PC-3 (cell line): ENCODE measurements at regions of chr1 and their contacts with region 1.

Region 1: DNA sequence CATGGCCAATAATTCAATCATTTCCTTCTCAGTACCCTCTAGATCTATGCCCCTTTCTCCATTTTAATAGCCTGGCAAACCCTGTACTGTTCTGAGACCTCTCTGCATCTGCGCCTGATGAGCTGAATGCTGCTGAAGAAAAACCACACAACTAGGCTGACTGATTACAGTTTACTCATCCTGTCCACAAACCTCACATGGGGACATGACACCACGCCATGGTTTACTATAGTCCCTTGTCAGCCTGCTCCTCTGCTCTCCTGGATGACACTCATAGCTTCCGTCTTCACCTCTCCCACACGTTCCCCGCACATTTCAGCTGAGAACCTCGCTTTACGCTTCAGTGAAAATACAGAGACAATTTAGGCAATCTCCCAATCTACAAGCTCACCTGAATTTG is 59.7 kb downstream of the DESI2 start:
- DNase-seq: no peak
- ATAC-seq: peak; percentile 58
- H3K4me3 ChIP-seq: no peak overlapping the region
- H3K27ac ChIP-seq: no peak overlapping the region
- H3K4me1 ChIP-seq: 0 out of 2 replicates have a peak, but pooled peaks cover 4% of the 10 kb centered on the region
- H3K27me3 ChIP-seq: no peaks in the 10 kb centered on the region
- CTCF ChIP-seq: no peak

Region 2: DNA sequence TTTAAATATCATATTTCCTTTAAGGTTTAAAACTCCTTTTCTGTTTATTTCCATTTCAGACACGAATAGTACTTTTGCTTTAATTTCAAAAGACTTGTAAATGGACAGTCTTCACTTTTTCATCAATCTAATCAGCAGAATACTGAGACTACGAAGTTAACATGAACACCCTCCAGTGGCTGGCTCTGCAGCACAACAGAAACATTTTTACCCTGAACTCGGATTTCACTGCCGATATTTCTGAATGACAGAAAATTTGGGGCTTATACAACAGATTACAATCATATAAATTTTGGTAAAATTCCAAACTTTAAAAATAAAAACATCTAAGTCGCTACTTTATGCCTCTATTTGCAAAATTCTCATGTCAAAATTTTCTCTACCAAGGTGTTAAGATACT is 948.9 kb before region 1 on chr1:
- CTCF ChIA-PET with region 1: no interaction called
- POLR2A ChIA-PET with region 1: no interaction called
- intact Hi-C with region 1: no loop called
- DNase-seq: no peak
- ATAC-seq: no peak
- H3K4me3 ChIP-seq: no peak overlapping the region
- H3K27ac ChIP-seq: no peak overlapping the region
- H3K4me1 ChIP-seq: no peaks in the 10 kb centered on the region
- H3K27me3 ChIP-seq: no peaks in the 10 kb centered on the region
- CTCF ChIP-seq: no peak

Region 3: DNA sequence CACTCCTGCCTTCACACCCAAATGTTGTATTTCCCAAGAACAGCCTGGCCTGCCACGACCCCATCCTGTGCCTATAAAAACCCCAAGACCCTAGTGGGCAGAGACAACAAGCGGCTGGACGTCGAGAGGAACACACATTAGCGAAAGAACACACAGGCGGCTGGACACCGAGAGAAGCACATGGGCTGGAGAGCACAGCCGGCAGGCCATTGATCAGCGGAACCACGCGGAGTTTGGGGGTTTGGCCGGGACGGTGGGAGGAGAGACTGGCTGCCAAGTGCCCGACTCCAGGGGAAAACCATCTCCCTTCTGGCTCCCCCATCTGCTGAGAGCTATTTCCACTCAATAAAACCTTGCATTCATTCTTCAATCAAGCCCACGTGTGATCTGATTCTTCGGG is 70.1 kb before region 1 on chr1:
- CTCF ChIA-PET with region 1: no interaction called
- POLR2A ChIA-PET with region 1: no interaction called
- intact Hi-C with region 1: no loop called
- DNase-seq: no peak
- ATAC-seq: no peak
- H3K4me3 ChIP-seq: no peak overlapping the region
- H3K27ac ChIP-seq: no peak overlapping the region
- H3K4me1 ChIP-seq: no peaks in the 10 kb centered on the region
- H3K27me3 ChIP-seq: peaks cover 15% of the 10 kb centered on the region; the same call in 1 of the 2 replicates
- CTCF ChIP-seq: no peak

Region 4: GRCh38 chr1:244727871-244728474 is 15.3 kb after region 1 on chr1:
- CTCF ChIA-PET with region 1: no interaction called
- POLR2A ChIA-PET with region 1: no interaction called
- intact Hi-C with region 1: no loop called
- DNase-seq: no peak
- ATAC-seq: no peak
- H3K4me3 ChIP-seq: no peak overlapping the region
- H3K27ac ChIP-seq: no peak overlapping the region
- H3K4me1 ChIP-seq: peaks cover 10% of the 10 kb centered on the region
- H3K27me3 ChIP-seq: no peaks in the 10 kb centered on the region
- CTCF ChIP-seq: no peak

Region 5: DNA sequence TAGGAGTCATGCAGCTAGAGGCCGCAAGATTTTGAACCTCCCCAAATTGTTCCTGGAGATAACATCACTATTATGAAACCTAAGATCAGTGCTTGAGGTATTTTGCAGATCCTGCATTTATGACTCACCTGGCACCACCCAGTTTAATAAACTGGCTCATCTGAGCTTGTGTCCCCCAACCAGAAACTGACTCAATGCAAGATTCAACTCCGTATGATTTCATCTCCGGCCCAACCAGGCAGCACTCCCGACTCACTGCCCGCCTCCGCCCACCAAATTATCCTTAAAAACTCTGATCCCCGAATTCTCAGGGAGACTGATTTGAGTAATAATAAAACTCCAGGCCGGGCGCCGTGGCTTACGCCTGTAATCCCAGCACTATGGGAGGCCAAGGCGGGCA is 27.4 kb after region 1 on chr1:
- CTCF ChIA-PET with region 1: no interaction called
- POLR2A ChIA-PET with region 1: no interaction called
- intact Hi-C with region 1: no loop called
- DNase-seq: peak; percentile 99
- ATAC-seq: peak; percentile 92
- H3K4me3 ChIP-seq: peak overlapping the region; percentile 33; the same call in 1 of the 2 replicates
- H3K27ac ChIP-seq: peak overlapping the region; percentile 77
- H3K4me1 ChIP-seq: peaks cover 25% of the 10 kb centered on the region
- H3K27me3 ChIP-seq: no peaks in the 10 kb centered on the region
- CTCF ChIP-seq: no peak; the same call in 1 of the 2 replicates

Region 6: GRCh38 chr1:244757091-244757939 is 44.6 kb after region 1 on chr1:
- CTCF ChIA-PET with region 1: no interaction called
- POLR2A ChIA-PET with region 1: no interaction called
- intact Hi-C with region 1: loop called (anchors 5 kb)
- DNase-seq: peak; percentile 22
- ATAC-seq: peak; percentile 37
- H3K4me3 ChIP-seq: no peak overlapping the region
- H3K27ac ChIP-seq: no peak overlapping the region
- H3K4me1 ChIP-seq: no peaks in the 10 kb centered on the region
- H3K27me3 ChIP-seq: no peaks in the 10 kb centered on the region
- CTCF ChIP-seq: no peak